ENCODE measurements at regions of chr1 and their contacts with region 1.

Region 1: GRCh38 chr1:150979092-150980056 is 2.7 kb upstream of the ANXA9 start:
- DNase-seq: peak; percentile 81
- H3K4me3 Mint-ChIP-seq: no peak overlapping the region
- H3K27ac Mint-ChIP-seq: peak overlapping the region; percentile 5
- H3K4me1 Mint-ChIP-seq: peaks cover 26% of the 10 kb centered on the region
- H3K27me3 Mint-ChIP-seq: no peaks in the 10 kb centered on the region

Region 2: DNA sequence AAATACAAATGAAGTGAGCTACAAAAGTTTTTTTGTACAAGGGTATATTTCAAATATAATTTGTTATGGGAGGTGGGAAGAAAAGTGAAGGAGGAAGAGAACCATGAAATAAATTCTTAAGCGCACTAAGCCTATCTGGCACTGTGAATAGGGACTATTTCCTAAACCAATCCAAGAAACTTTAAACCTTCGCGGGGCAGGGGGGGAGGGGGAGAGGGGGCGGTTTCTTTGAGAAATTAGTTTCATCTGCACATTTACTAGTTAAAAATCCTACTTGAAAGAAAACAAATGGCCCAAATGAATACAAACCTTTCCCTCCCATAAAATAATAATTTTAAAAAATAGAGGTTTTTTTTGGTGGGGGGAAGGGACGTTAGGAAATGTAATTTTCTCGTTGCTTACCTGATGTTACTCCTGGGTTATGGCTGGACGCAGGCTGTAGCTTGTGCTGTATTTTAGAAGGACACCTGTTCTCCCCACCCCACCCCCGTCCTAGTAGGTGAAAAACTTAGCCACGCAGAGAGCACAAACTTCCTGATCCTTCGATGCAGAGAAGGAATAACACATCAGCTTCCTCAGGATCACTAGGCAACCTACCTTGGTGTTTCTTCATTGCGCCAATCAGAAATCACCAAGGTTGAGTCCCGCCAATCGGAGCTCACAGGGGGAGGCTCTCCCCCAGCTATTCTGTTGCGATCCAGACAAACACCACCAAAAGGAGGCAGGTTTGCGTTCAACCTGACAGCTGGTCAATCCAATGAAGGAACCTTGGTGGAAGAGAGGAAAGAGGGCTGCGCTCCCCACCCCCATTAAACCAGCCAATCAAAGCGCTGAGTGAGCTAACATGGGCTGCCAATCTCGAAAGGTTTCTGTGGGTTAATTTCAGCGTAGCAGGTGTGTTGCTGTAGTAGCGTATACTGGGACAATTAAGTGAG is 282.5 kb before region 1 on chr1 and contains the start of gene GOLPH3L:
- intact Hi-C with region 1: loop called (anchors 2 kb)
- DNase-seq: peak; percentile 91
- H3K4me3 Mint-ChIP-seq: peak within 1 kb of the TSS; percentile 96
- H3K27ac Mint-ChIP-seq: peak within 1 kb of the TSS; percentile 88
- H3K4me1 Mint-ChIP-seq: peaks cover 17% of the 10 kb centered on the region
- H3K27me3 Mint-ChIP-seq: peaks cover 9% of the 10 kb centered on the region
- total RNA-seq, gene GOLPH3L: 21.3 and 22.4 TPM in 2 replicates

Region 3: DNA sequence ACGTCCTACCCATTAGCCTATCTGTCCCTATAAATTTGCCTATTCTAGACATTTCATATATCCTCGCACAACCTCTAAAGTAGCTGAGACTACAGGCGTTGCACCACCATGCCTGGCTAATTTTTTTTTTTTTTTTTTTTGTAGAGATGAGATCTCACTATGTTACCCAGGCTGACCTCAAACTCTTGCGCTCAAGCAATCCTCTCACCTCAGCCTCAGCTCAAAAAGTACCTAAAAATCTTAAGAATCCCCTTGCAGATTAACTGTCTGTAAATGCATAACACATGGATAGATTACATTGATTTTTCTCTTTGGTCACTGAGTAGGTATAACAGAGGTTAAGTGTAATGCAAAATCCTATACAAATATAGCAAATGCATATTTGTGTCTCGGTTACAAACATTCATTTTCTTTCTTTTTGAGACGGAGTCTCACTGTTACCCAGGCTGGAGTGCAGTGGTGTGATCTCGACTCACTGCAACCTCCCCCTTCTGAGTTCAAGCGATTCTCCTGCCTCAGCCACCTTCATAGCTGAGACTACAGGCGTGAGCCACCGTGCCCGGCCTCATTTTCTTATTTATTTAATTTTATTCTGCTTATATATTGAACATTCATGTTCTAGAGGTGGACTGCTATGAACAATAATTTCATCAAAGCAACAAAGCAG is 261.0 kb before region 1 on chr1:
- intact Hi-C with region 1: no loop called
- DNase-seq: no peak
- H3K4me3 Mint-ChIP-seq: no peak overlapping the region
- H3K27ac Mint-ChIP-seq: no peak overlapping the region
- H3K4me1 Mint-ChIP-seq: no peaks in the 10 kb centered on the region
- H3K27me3 Mint-ChIP-seq: peaks cover 5% of the 10 kb centered on the region

Region 4: DNA sequence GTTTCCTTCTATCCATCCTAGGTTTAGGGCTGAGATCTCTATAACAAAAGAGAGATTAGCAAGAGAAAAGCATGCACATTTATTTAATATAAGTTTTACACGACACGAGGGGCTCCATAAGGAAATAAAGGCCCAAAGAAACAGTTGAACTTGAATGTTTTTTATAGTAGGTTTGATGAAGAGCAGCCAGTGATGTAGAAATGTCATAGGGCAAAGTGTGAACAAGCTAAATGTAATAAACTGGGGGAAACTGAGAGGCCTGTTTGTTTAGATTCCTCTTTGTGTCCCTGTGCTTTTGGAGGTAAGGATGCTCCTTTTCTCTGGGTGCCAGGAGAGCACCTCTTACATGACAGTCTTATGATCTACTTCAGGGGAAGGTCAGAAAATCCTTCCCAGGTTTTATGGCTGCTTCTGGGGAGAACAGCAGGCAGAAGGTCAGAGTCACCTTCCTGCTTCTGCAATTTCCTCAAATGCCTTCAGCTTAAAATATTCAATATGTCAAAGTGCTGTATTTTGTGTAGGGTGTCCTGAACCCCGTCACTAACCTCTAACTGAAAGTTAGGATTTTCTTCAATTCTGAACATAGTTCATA is 249.1 kb before region 1 on chr1:
- intact Hi-C with region 1: no loop called
- DNase-seq: no peak
- H3K4me3 Mint-ChIP-seq: no peak overlapping the region
- H3K27ac Mint-ChIP-seq: no peak overlapping the region
- H3K4me1 Mint-ChIP-seq: no peaks in the 10 kb centered on the region
- H3K27me3 Mint-ChIP-seq: no peaks in the 10 kb centered on the region

Region 5: GRCh38 chr1:150995896-150996295 is 16.5 kb after region 1 on chr1:
- intact Hi-C with region 1: loop called (anchors 1 kb)
- DNase-seq: no peak
- H3K4me3 Mint-ChIP-seq: no peak overlapping the region
- H3K27ac Mint-ChIP-seq: no peak overlapping the region
- H3K4me1 Mint-ChIP-seq: peaks cover 12% of the 10 kb centered on the region
- H3K27me3 Mint-ChIP-seq: no peaks in the 10 kb centered on the region

Measured in activated T-helper 2 cell treated with anti-CD3 and anti-CD28 coated beads, Interferon-gamma antibody, Interleukin-2, Interleukin-4, amounts not matched to agents 10 μg/mL and 5 μg/mL and 100 μg/mL, durations not matched to agents 14 hours and 24 hours and 36 hours (primary cell).